AG04450 (cell line): ENCODE measurements at regions of chr7 and their contacts with region 1.

Region 1: DNA sequence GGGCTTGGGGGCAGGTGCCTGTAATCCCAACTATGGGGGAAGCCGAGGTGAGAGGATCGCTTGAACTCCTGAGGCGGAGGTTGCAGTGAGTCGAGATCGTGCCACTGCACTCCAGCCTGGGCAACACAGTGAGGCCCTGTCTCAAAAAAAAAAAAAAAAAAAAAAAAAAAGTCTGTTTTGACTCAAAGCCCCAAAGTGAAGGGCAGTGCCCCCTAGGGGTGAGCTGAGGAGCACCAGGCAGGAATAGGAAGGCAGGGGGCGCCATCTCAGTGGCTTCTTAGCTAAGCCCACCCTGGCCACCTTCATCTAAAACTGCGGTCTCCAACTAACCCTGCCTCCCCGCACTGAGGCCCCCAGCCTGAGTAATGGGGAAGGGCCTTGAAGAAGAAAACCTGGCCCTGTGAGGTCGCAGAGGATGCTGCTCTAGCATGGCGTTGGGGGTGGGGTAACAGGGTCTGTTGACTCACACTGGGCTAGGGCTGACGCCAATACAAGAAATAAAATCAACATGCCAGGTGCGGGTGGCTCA is 9.8 kb downstream of the PODXL start:
- DNase-seq: no peak
- H3K4me3 ChIP-seq: no peak overlapping the region
- H3K27ac ChIP-seq: no peak overlapping the region
- H3K27me3 ChIP-seq: peaks cover 9% of the 10 kb centered on the region
- CTCF ChIP-seq: peak; percentile 63

Region 2: GRCh38 chr7:130673066-130673465 is 873.6 kb before region 1 on chr7:
- CTCF ChIA-PET with region 1: no interaction called
- POLR2A ChIA-PET with region 1: no interaction called
- DNase-seq: no peak
- H3K4me3 ChIP-seq: no peak overlapping the region
- H3K27ac ChIP-seq: no peak overlapping the region
- H3K27me3 ChIP-seq: no peaks in the 10 kb centered on the region
- CTCF ChIP-seq: no peak

Region 3: GRCh38 chr7:131521651-131522163 is 24.9 kb before region 1 on chr7:
- CTCF ChIA-PET with region 1: interaction called, 12 read pairs
- POLR2A ChIA-PET with region 1: no interaction called
- DNase-seq: no peak
- H3K4me3 ChIP-seq: no peak overlapping the region
- H3K27ac ChIP-seq: no peak overlapping the region
- H3K27me3 ChIP-seq: peaks cover 2% of the 10 kb centered on the region
- CTCF ChIP-seq: no peak